MCF 10A (cell line): ENCODE measurements at regions of chr15 and their contacts with region 1.

Region 1: DNA sequence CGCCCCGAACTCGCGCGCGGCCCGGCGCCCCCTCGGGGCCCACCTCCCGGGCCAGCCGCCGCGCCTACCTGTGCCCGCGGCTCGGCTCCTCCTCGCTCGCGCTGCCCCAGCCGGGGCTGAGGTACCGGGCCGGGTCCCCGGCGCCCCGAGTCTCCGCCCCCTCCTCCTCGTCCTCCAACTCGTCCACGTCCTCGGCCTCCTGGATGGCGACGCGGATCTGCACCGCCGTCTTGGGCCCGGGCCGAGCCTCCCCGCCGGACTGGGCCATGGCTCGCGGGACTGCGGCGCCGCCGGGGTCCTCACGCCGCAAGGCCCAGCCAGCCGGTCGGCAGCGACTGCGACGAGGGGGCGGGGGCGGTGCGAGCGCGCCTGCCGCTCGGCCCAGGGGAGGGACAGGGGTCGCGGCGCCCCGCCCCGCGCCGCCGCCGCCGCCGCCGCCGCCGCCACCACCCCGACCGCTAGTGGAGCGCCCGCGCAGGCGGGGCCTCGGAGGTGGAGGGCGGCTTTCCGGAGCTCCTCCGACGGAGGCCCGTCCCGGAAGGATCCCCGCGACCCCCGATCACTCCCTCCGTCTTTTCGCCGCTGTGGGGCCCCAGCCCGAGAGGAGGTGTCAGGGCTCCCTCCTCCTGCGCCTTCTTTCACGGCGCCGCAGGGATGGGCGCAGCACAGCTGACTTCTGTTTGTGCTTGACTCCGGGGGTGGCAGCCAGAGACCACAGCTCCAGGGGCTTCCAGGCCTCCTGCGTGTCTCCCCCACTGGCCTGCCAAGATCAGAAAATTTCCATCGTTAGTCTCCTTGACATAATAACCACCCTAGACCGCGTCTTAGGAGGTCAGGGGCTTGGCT is at the start of gene LARP6:
- DNase-seq: peak; percentile 21
- H3K4me3 Mint-ChIP-seq: peak within 1 kb of the TSS; percentile 83
- H3K27ac Mint-ChIP-seq: peak within 1 kb of the TSS; percentile 91
- H3K4me1 Mint-ChIP-seq: peaks cover 35% of the 10 kb centered on the region
- H3K27me3 Mint-ChIP-seq: no peaks in the 10 kb centered on the region
- CTCF ChIP-seq: no peak
- total RNA-seq, gene LARP6: 67.3 and 77.5 TPM in 2 replicates

Region 2: GRCh38 chr15:70870051-70870450 is 16.0 kb after region 1 on chr15:
- CTCF ChIA-PET with region 1: interaction called, 12 read pairs
- POLR2A ChIA-PET with region 1: interaction called, 20 read pairs
- intact Hi-C with region 1: loop called (anchors 1 kb)
- DNase-seq: no peak
- H3K4me3 Mint-ChIP-seq: no peak overlapping the region
- H3K27ac Mint-ChIP-seq: no peak overlapping the region
- H3K4me1 Mint-ChIP-seq: peaks cover 22% of the 10 kb centered on the region
- H3K27me3 Mint-ChIP-seq: no peaks in the 10 kb centered on the region
- CTCF ChIP-seq: no peak